HCT116 (cell line): ENCODE measurements at regions of chr10 and their contacts with region 1.

Region 1: DNA sequence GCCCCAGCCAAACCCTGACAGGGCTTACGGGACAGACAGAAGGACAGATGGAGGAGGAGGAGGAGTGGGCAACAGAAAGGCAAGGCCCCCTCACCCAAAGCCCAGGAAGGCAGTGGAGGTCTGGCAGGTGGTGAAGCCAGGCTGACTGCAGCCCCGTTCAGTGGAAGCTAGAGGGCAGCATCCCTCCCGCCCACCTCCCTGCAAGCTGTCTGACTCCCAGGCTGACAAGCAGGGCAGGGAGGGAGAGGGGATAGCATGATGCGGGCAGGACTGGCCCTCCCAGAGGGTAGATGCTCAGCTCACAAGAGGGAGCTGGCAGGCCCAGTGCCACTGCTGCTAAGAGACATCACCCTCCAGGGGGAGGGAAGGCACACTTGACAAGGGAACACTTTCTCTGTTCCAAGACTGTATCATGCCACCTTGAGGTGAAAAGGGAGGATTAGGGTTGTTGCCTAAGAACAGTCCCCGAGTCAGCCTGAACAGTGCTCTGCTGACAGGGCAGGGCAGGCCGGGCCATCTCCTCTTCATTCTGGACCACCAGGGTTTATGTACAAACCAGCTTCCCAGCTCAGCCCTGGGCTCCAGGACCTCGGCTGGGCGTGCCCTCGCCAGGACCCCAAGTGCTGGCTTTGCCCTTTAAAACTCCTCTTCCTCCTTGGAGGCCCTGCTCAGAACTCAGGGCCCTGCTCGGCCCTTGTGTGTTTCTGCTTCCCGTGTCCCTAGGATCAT is 61.8 kb downstream of the RASGEF1A start:
- DNase-seq: peak; percentile 68
- ATAC-seq: peak; percentile 51
- H3K4me3 ChIP-seq: no peak overlapping the region
- H3K27ac ChIP-seq: peak overlapping the region; percentile 70
- H3K4me1 ChIP-seq: peaks cover 21 to 37% of the 10 kb centered on the region in 2 experiments; a peak in 3 of 4 replicates
- H3K27me3 ChIP-seq: no peaks in the 10 kb centered on the region
- CTCF ChIP-seq: peak; percentile 84 to 97 (median 94)
- POLR2A ChIP-seq: no peak
- RAD21 ChIP-seq: peak; percentile 73

Region 2: GRCh38 chr10:42866115-42866995 is 338.8 kb before region 1 on chr10:
- CTCF ChIA-PET with region 1: no interaction called
- POLR2A ChIA-PET with region 1: no interaction called
- RAD21 ChIA-PET with region 1: no interaction called
- intact Hi-C with region 1: loop called (anchors 10 kb)
- DNase-seq: peak; percentile 47
- ATAC-seq: peak; percentile 100
- H3K4me3 ChIP-seq: no peak overlapping the region
- H3K27ac ChIP-seq: no peak overlapping the region
- H3K4me1 ChIP-seq: peaks cover 0 to 12% of the 10 kb centered on the region in 2 experiments; a peak in 3 of 4 replicates
- H3K27me3 ChIP-seq: peaks cover under 1% of the 10 kb centered on the region
- CTCF ChIP-seq: peak; percentile 66 to 81 (median 72)
- POLR2A ChIP-seq: no peak
- RAD21 ChIP-seq: peak; percentile 91

Region 3: DNA sequence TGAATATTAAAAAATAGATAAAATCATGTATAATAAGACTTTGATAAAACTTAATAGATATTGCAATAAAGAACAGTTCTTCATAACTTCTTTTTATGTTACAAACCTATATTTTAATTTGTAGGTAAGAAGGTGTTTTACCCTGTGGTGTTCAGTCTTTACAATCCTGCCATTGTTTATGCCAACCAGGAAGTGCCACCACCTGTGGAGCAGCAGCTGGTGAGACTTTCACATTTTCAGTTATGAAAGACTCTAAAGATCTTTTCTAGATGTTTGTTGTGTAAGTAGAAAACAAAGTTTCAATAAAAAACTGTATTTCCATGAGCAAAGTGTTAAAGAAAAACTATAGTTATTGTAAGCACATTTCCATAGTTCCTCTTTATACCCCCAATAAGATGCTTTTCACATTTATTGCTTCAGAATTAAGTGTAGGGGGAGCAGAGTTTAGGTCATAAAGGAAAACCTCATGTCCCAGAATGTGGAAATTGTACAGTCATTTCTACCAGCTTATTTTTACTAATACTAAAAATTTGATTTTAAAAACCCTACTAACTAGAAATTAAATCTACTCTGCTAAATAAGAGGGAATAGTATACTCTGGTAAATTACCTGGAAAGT is 38.1 kb before region 1 on chr10:
- CTCF ChIA-PET with region 1: interaction called, 11 read pairs
- POLR2A ChIA-PET with region 1: no interaction called
- RAD21 ChIA-PET with region 1: no interaction called
- intact Hi-C with region 1: no loop called
- DNase-seq: no peak
- ATAC-seq: no peak
- H3K4me3 ChIP-seq: no peak overlapping the region
- H3K27ac ChIP-seq: no peak overlapping the region
- H3K4me1 ChIP-seq: peaks cover 0 to 3% of the 10 kb centered on the region in 2 experiments; a peak in 1 of 4 replicates
- H3K27me3 ChIP-seq: no peaks in the 10 kb centered on the region
- CTCF ChIP-seq: no peak
- POLR2A ChIP-seq: no peak
- RAD21 ChIP-seq: no peak

Region 4: GRCh38 chr10:43221419-43222209 is 16.5 kb after region 1 on chr10:
- CTCF ChIA-PET with region 1: interaction called, 39 read pairs
- POLR2A ChIA-PET with region 1: no interaction called
- RAD21 ChIA-PET with region 1: no interaction called
- intact Hi-C with region 1: no loop called
- DNase-seq: no peak
- ATAC-seq: peak; percentile 90
- H3K4me3 ChIP-seq: no peak overlapping the region
- H3K27ac ChIP-seq: no peak overlapping the region
- H3K4me1 ChIP-seq: peaks cover 0 to 7% of the 10 kb centered on the region in 2 experiments; a peak in 2 of 4 replicates
- H3K27me3 ChIP-seq: no peaks in the 10 kb centered on the region
- CTCF ChIP-seq: peak; percentile 40 to 47 (median 45); a peak in 5 of 6 replicates
- POLR2A ChIP-seq: no peak
- RAD21 ChIP-seq: no peak; the same call in 1 of the 2 replicates

Region 5: GRCh38 chr10:43348511-43349312 is 143.6 kb after region 1 on chr10:
- CTCF ChIA-PET with region 1: interaction called, 8 read pairs
- POLR2A ChIA-PET with region 1: interaction called, 4 read pairs
- RAD21 ChIA-PET with region 1: no interaction called
- intact Hi-C with region 1: loop called (anchors 2 kb)
- DNase-seq: peak; percentile 52
- ATAC-seq: peak; percentile 98
- H3K4me3 ChIP-seq: no peak overlapping the region
- H3K27ac ChIP-seq: no peak overlapping the region
- H3K4me1 ChIP-seq: peaks cover 6 to 26% of the 10 kb centered on the region in 2 experiments
- H3K27me3 ChIP-seq: no peaks in the 10 kb centered on the region
- CTCF ChIP-seq: peak; percentile 97 to 99 (median 98)
- POLR2A ChIP-seq: no peak
- RAD21 ChIP-seq: peak; percentile 97

Region 6: GRCh38 chr10:43922335-43923280 is 717.5 kb after region 1 on chr10:
- CTCF ChIA-PET with region 1: no interaction called
- POLR2A ChIA-PET with region 1: no interaction called
- RAD21 ChIA-PET with region 1: no interaction called
- intact Hi-C with region 1: no loop called
- DNase-seq: no peak
- ATAC-seq: no peak
- H3K4me3 ChIP-seq: no peak overlapping the region
- H3K27ac ChIP-seq: no peak overlapping the region
- H3K4me1 ChIP-seq: no peaks in the 10 kb centered on the region
- H3K27me3 ChIP-seq: peaks cover 48% of the 10 kb centered on the region
- CTCF ChIP-seq: no peak
- POLR2A ChIP-seq: no peak
- RAD21 ChIP-seq: no peak